Heart left ventricle (tissue), 16 donors: ENCODE measurements at regions of chr6 and their contacts with region 1.

Region 1: GRCh38 chr6:31087494-31088089 is 24.8 kb downstream of the C6orf15 start:
- DNase-seq: peak; percentile 80 to 89 (median 86)
- ATAC-seq: peak; percentile 75 to 95 (median 94)
- H3K4me3 ChIP-seq: no peak overlapping the region
- H3K27ac ChIP-seq: no peak overlapping the region
- H3K4me1 ChIP-seq: peaks cover 0 to 15% (median 5%) of the 10 kb centered on the region in 12 donors
- H3K27me3 ChIP-seq: peaks cover 0 to 6% (median 0%) of the 10 kb centered on the region in 9 donors
- CTCF ChIP-seq: peak; percentile 46 to 86 (median 80)
- POLR2A ChIP-seq: no peak

Region 2: DNA sequence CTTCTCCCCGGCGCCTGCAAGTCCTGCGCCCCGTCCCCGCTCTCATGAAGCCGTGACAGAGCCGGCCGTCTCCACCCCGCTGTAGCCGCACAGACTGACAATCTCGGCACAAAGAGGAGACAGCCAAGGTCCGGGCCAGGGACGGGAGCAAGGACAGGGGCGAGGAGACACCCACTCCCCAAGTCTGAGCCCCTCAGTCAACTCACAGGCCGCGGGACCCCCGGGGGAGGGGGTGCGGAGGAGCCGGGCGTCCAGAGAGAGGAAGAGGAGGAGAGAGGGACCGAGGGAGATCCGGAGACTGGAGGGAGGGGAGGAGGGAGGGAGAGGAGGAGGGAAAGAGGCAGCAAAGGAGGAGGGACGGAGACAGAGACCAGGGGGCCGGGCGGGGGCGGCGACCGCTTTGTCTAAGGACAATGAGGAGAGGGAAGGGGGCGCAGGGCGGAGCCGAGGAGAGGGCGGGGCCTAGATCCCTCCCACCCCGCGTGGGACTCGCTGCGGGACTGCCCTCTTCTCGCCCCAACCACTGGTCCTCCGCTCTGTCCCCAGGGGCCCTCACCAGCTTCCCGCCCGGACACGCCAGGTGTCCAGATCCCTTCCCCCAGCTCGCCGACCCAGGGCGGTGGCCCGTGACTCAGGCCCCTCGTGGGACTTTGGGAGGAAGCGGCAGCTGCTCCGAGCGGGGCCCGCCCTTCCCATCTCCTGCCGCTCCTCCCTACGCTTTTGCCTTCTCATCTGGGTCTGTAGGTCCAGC is 400.5 kb before region 1 on chr6:
- intact Hi-C with region 1: loop called in 3 of 10 experiments (anchors 5 to 10 kb)
- DNase-seq: peak; percentile 97 to 99 (median 98)
- ATAC-seq: peak; percentile 71 to 85 (median 79)
- H3K4me3 ChIP-seq: peak overlapping the region; percentile 52 to 96 (median 74)
- H3K27ac ChIP-seq: peak overlapping the region; percentile 92 to 100 (median 98)
- H3K4me1 ChIP-seq: peaks cover 4 to 78% (median 46%) of the 10 kb centered on the region in 12 donors
- H3K27me3 ChIP-seq: no peaks in the 10 kb centered on the region
- CTCF ChIP-seq: no peak
- POLR2A ChIP-seq: no peak

Region 3: GRCh38 chr6:30828027-30828960 is 259.3 kb before region 1 on chr6:
- intact Hi-C with region 1: loop called in 9 of 10 experiments (anchors 1 to 5 kb)
- DNase-seq: peak; percentile 84 to 90 (median 89)
- ATAC-seq: peak; percentile 90 to 95 (median 94)
- H3K4me3 ChIP-seq: peak overlapping the region in 6 of 12 donors; percentile 6 to 44 (median 14)
- H3K27ac ChIP-seq: peak overlapping the region; percentile 11 to 86 (median 75)
- H3K4me1 ChIP-seq: peaks cover 0 to 53% (median 16%) of the 10 kb centered on the region in 12 donors
- H3K27me3 ChIP-seq: no peaks in the 10 kb centered on the region
- CTCF ChIP-seq: peak; percentile 92 to 98 (median 94)
- POLR2A ChIP-seq: peak in 1 of 2 donors; percentile 15

Region 4: DNA sequence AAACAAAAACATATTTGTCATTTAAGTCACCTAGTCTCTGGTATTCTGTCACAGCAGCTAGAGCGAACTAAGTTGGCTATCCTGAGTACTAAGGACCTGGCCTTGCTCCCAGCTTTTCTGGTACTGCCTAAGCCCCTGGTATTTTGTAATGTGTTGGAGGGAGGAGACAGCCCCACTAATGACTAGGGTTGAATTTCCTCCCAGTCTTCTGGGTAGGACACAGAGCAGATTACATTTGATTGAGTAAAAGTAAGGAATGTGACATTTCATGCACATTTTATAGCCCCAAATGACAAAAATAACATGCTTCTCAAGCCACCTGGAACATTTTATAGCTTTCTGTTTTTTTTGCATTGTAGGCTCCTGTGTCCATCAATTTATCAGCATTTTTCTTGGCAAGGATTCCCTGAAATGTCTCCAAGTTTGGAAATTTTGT is 251.1 kb before region 1 on chr6:
- intact Hi-C with region 1: loop called in 1 of 10 experiments (anchors 5 kb)
- DNase-seq: peak in 4 of 5 donors; percentile 44 to 70 (median 56)
- ATAC-seq: peak; percentile 80 to 93 (median 90)
- H3K4me3 ChIP-seq: no peak overlapping the region
- H3K27ac ChIP-seq: peak overlapping the region in 4 of 12 donors; percentile 12 to 43 (median 29)
- H3K4me1 ChIP-seq: peaks cover 0 to 18% (median 6%) of the 10 kb centered on the region in 12 donors
- H3K27me3 ChIP-seq: no peaks in the 10 kb centered on the region
- CTCF ChIP-seq: no peak
- POLR2A ChIP-seq: no peak

Region 5: GRCh38 chr6:30974488-30975252 is 112.9 kb before region 1 on chr6:
- intact Hi-C with region 1: no loop called
- DNase-seq: no peak
- ATAC-seq: no peak
- H3K4me3 ChIP-seq: no peak overlapping the region
- H3K27ac ChIP-seq: no peak overlapping the region
- H3K4me1 ChIP-seq: no peaks in the 10 kb centered on the region
- H3K27me3 ChIP-seq: peaks cover 0 to 5% (median 0%) of the 10 kb centered on the region in 9 donors
- CTCF ChIP-seq: no peak
- POLR2A ChIP-seq: no peak

Region 6: GRCh38 chr6:31128093-31128676 is 40.6 kb after region 1 on chr6:
- intact Hi-C with region 1: loop called in 1 of 10 experiments (anchors 5 kb)
- DNase-seq: peak in 3 of 5 donors; percentile 39 to 57 (median 52)
- ATAC-seq: peak in 1 of 4 donors; percentile 21
- H3K4me3 ChIP-seq: no peak overlapping the region
- H3K27ac ChIP-seq: no peak overlapping the region
- H3K4me1 ChIP-seq: peaks cover 4 to 47% (median 29%) of the 10 kb centered on the region in 12 donors
- H3K27me3 ChIP-seq: no peaks in the 10 kb centered on the region
- CTCF ChIP-seq: peak; percentile 75 to 93 (median 85)
- POLR2A ChIP-seq: no peak

Region 7: DNA sequence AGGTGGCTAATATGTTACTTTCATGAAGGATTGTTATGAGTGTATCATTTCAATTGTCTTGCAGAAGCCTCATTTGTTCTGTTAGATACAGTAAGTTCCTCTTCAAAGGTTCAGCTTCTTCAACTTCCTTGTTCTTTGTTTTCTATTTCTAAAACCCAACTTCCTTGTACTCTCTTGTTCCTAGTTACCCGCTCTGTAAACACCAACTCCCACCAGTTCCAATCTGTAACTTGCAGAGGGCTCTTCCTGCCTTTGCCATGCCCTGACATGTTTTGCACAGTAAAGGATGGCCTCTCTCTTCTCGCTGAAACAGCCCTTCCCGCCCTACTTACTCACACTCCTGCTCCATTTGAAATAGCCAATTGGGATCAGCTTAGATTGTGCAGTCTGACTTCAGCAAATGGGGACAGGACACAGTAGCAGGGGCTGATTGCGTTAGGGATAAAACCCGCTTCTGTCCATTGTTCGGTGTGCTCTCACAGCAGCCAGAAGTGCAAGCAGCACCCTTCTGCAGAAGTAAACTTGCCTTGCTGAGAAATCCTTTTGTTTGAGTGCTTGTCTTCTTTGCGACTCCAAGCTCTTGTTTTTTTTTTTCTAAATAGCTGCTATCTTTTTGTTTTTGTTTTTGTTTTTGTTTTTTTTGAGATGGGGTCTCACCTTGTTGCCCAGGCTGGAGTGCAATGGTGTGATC is 128.8 kb after region 1 on chr6:
- intact Hi-C with region 1: no loop called
- DNase-seq: no peak
- ATAC-seq: peak; percentile 26 to 88 (median 52)
- H3K4me3 ChIP-seq: no peak overlapping the region
- H3K27ac ChIP-seq: peak overlapping the region in 1 of 12 donors; percentile 80
- H3K4me1 ChIP-seq: peaks cover 0 to 10% (median 0%) of the 10 kb centered on the region in 12 donors
- H3K27me3 ChIP-seq: no peaks in the 10 kb centered on the region
- CTCF ChIP-seq: no peak
- POLR2A ChIP-seq: no peak